Activated naive CD4-positive, alpha-beta T cell treated with anti-CD3 and anti-CD28 coated beads for 36 hours (primary cell): ENCODE measurements at regions of chr21 and their contacts with region 1.

Region 1: DNA sequence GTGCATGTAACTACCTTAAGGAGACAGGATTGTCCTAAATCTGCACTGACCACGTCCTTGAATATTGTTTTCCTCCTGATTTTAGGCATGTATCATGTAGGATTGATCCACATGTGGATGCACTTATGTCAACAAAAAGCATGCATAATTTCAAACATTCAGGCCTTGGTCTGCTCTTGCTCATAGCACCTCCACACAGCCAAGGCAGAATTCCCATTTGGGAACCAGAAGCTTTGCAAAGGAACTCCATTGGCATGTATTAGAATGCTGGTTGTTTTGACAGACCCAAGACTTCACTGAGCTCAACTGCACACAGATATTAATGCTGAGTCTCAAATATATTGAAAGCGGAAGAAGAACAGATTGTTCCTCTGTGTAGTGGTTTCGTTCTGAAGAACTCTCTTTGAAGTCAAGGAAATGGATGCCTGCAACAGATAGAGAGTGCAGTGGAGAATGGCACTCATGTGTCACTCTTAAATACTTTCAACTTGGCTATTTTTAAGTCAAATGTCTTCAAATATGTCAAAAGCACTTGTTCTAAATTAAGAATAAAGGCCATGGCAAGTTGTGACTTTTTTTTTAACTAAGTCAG is 387.6 kb downstream of the LTN1 start:
- DNase-seq: peak; percentile 7
- H3K4me3 Mint-ChIP-seq: no peak overlapping the region
- H3K27ac Mint-ChIP-seq: no peak overlapping the region
- H3K4me1 Mint-ChIP-seq: peaks cover 19% of the 10 kb centered on the region
- H3K27me3 Mint-ChIP-seq: no peaks in the 10 kb centered on the region

Region 2: DNA sequence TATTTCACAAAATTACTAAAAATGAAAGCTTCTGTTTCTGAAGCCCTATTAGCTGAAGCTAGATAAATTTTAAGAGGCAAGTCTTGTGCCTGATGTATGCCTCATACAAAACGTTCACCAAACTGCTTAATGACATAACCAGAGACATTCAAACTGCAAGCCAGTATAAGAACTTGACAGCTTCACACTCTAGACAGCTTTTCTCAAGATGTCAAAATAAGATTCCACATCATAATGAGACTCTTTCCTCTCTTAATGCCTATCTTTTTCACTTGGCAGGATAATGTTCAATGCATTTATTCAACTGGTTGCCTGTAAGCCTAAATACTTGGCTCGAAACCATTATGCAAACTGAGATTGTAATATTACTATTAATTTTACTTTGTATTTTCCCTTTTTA is 36.4 kb before region 1 on chr21:
- CTCF ChIA-PET with region 1: no interaction called
- intact Hi-C with region 1: no loop called
- DNase-seq: no peak
- H3K4me3 Mint-ChIP-seq: no peak overlapping the region
- H3K27ac Mint-ChIP-seq: no peak overlapping the region
- H3K4me1 Mint-ChIP-seq: no peaks in the 10 kb centered on the region
- H3K27me3 Mint-ChIP-seq: no peaks in the 10 kb centered on the region

Region 3: DNA sequence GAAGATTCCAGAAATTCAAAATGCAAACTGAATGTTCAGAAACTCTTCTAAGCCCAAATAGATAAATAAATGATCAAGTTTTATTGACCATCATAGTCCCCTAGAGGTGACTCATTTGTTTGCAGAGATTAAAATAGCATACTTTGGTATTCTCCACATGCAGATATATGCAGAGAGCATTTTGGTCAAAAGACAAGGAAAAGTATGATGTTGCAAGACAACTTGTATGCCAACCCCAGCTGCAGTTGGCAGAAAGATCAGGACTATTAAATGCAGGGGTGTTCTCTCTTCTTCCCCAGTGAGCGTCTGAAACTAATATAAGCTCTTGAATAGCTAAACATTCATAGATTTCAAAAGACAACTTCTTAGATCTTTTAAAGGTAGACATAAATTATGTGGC is 17.3 kb before region 1 on chr21:
- CTCF ChIA-PET with region 1: no interaction called
- intact Hi-C with region 1: no loop called
- DNase-seq: no peak
- H3K4me3 Mint-ChIP-seq: no peak overlapping the region
- H3K27ac Mint-ChIP-seq: no peak overlapping the region
- H3K4me1 Mint-ChIP-seq: no peaks in the 10 kb centered on the region
- H3K27me3 Mint-ChIP-seq: no peaks in the 10 kb centered on the region

Region 4: DNA sequence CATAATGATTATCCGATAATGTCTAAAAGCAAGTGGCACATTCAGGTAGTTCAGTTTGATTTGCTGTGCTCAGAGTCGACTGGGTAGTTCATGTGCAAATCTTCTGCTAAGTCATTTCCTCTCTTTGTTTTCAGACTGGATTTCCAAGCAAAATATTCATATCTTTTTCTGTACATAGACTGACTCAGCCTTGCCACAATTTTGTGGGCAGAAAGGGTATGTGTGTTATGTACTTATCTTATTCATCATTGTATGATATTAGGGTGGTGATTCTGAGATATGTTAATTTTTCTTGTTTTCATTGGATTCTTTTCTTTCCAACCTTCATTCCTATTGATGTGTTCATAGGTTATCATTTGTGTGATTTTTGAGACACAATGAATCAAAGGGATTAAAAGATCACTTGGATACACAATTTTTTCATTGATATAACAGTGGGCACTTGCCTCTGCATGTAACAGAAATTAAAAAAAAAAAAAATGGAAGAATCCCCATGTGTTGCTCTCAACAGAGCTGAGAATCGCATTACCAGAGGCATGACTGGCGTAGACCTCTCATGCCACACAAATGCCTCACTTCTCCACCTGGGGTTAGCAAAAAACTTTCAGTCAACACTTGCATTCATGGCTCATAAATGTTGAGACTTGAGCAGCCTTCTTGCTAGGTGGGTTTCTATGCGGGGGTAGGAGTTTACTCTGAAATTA is 32.1 kb after region 1 on chr21:
- CTCF ChIA-PET with region 1: no interaction called
- intact Hi-C with region 1: loop called (anchors 1 kb)
- DNase-seq: peak; percentile 59
- H3K4me3 Mint-ChIP-seq: no peak overlapping the region
- H3K27ac Mint-ChIP-seq: no peak overlapping the region
- H3K4me1 Mint-ChIP-seq: peaks cover 22% of the 10 kb centered on the region
- H3K27me3 Mint-ChIP-seq: no peaks in the 10 kb centered on the region